CD4-positive, alpha-beta T cell (primary cell): ENCODE measurements at regions of chr10 and their contacts with region 1.

Region 1: DNA sequence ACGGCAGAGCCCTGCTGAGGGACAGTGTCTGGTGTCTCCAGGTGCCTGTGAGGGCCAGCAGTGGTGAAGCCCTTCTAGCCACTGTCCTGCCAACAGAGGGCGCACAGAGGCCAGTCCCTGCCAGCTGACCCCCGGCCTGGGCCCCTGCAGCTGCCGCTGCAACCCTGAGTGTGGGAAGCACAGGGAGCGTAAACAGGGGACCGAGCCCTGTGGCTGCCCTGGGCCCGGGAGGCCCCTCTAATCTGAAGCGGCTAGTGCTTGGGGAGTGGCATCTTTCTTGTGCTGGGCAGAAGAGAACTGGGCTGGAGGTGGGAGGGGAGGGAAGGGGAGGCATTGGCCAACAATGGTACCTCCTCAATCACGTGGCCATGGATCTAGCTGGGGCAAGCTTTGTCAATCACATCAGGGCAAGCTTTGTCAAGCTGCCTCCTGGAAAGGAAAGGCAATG is 34.6 kb downstream of the TRIM8 start:
- DNase-seq: peak in 3 of 14 experiments; percentile 28 to 49 (median 41)
- ATAC-seq: no peak
- H3K4me3 ChIP-seq: no peak overlapping the region
- H3K4me3 Mint-ChIP-seq: peak overlapping the region; percentile 30
- H3K27ac ChIP-seq: no peak overlapping the region
- H3K27ac Mint-ChIP-seq: peak overlapping the region; percentile 49
- H3K4me1 ChIP-seq: peaks cover 55% of the 10 kb centered on the region
- H3K4me1 Mint-ChIP-seq: peaks cover 67% of the 10 kb centered on the region
- H3K27me3 ChIP-seq: no peaks in the 10 kb centered on the region
- H3K27me3 Mint-ChIP-seq: no peaks in the 10 kb centered on the region
- CTCF ChIP-seq: no peak

Region 2: GRCh38 chr10:102652170-102652916 is 26.5 kb before region 1 on chr10:
- CTCF ChIA-PET with region 1: interaction called, 3 read pairs
- POLR2A ChIA-PET with region 1: interaction called, 134 read pairs
- intact Hi-C with region 1: loop called in 1 of 2 experiments (anchors 2 kb)
- DNase-seq: peak in 1 of 14 experiments; percentile 10
- ATAC-seq: no peak
- H3K4me3 ChIP-seq: no peak overlapping the region
- H3K4me3 Mint-ChIP-seq: peak overlapping the region; percentile 69
- H3K27ac ChIP-seq: peak overlapping the region; percentile 52 to 66
- H3K27ac Mint-ChIP-seq: peak overlapping the region; percentile 97
- H3K4me1 ChIP-seq: peaks cover 67% of the 10 kb centered on the region
- H3K4me1 Mint-ChIP-seq: peaks cover 70% of the 10 kb centered on the region
- H3K27me3 ChIP-seq: no peaks in the 10 kb centered on the region
- H3K27me3 Mint-ChIP-seq: no peaks in the 10 kb centered on the region
- CTCF ChIP-seq: no peak

Region 3: DNA sequence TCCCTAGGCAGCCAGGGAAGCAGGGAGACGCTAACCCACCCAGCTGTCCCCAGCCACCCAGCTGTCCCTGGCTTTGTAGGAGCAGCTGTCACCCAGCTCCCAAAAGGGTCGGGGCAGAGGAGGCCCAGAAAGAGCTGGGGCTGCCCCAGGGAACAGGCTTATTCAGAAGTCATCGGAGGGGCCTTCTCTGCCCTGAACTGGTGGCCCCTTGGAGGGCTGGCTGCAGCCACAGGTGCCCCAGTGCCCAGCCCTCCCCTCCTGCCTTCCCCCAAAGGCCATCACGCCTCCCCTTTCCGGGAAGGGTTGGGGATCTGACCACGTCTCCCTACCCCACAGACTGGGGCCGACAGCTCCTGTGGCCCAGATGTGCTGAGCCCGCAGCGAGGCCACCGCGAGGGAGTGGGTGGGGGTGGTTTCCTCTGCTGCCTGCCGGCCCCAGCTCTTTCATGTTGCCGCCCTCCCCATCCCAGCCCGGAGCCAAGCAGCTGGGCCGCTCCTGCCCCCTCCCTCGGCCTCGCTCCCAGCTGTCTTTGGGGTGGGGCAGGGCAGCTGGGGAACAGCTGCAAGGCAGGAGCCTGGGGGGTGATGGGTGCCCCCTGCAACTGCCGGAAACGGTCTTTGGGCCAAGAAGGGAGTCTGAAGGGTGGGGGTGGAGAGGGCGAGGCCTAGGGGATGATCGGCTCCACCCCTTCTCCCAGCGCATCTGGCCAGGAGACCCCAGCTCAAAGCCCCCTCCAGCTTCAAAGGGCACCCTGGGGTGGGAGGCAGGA is 17.8 kb before region 1 on chr10:
- CTCF ChIA-PET with region 1: interaction called, 3 read pairs
- POLR2A ChIA-PET with region 1: interaction called, 26 read pairs
- intact Hi-C with region 1: no loop called
- DNase-seq: peak in 13 of 14 experiments; percentile 33 to 81 (median 46)
- ATAC-seq: peak; percentile 74
- H3K4me3 ChIP-seq: peak overlapping the region; percentile 45
- H3K4me3 Mint-ChIP-seq: peak overlapping the region; percentile 52
- H3K27ac ChIP-seq: peak overlapping the region; percentile 40 to 60
- H3K27ac Mint-ChIP-seq: peak overlapping the region; percentile 82
- H3K4me1 ChIP-seq: peaks cover 52% of the 10 kb centered on the region
- H3K4me1 Mint-ChIP-seq: peaks cover 40% of the 10 kb centered on the region
- H3K27me3 ChIP-seq: no peaks in the 10 kb centered on the region
- H3K27me3 Mint-ChIP-seq: no peaks in the 10 kb centered on the region
- CTCF ChIP-seq: no peak

Region 4: DNA sequence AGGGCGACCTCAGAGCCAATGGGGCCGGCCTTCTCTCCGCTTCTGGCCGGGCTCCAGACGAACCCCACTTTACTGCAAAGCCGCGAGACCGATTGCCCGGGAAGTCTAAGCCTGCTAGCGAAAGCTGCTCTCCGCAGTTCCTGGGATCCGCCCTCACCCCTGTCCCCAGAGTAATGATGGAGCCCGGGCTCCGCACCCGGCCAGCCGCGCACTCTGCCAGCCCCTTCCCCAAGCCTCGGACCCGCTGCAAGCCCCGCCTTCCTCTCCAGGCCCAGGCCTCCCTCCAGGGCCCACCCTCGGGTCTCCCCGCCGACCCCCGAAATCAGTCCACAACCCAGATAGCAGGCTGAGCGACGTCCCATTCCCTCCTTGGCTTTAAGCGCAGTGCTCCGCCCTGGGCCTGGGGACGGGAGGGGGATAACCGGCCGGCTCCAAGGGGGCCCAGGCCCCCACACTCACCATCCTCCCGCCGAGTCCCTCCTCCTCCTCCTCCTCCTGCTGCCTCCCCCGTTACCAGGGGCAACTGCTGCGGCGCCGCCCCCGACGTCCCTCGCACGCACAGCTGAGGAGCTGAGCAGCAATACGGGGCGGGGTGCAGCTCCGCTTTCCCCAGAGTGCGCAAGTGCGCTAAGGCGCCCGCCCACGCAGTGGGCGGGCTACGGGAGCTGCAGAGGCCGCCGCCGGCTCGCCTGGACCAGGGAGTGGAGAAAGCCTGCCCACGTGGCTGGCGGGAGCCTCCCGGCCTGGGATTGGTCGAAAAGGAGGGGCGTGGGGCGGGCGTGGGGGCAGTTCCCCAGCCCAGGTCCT is 35.2 kb after region 1 on chr10 and contains the start of gene ARL3:
- CTCF ChIA-PET with region 1: interaction called, 20 read pairs
- POLR2A ChIA-PET with region 1: interaction called, 42 read pairs
- intact Hi-C with region 1: loop called (anchors 2 to 5 kb)
- DNase-seq: peak; percentile 82 to 98 (median 92)
- ATAC-seq: peak; percentile 89
- H3K4me3 ChIP-seq: peak within 1 kb of the TSS; percentile 98
- H3K4me3 Mint-ChIP-seq: peak within 1 kb of the TSS; percentile 93
- H3K27ac ChIP-seq: peak within 1 kb of the TSS; percentile 84 to 86
- H3K27ac Mint-ChIP-seq: peak within 1 kb of the TSS; percentile 81
- H3K4me1 ChIP-seq: peaks cover 34% of the 10 kb centered on the region
- H3K4me1 Mint-ChIP-seq: peaks cover 61% of the 10 kb centered on the region
- H3K27me3 ChIP-seq: no peaks in the 10 kb centered on the region
- H3K27me3 Mint-ChIP-seq: no peaks in the 10 kb centered on the region
- CTCF ChIP-seq: peak; percentile 46
- total RNA-seq, gene ARL3: 0.99 to 1.3 TPM